Left ventricle myocardium superior (tissue), 1 donor: ENCODE measurements at regions of chr20 and their contacts with region 1.

Region 1: GRCh38 chr20:24629668-24630067 is 160.2 kb downstream of the SYNDIG1 start:
- DNase-seq: no peak
- ATAC-seq: peak; percentile 27

Region 2: GRCh38 chr20:23691655-23692054 is 938.0 kb before region 1 on chr20:
- intact Hi-C with region 1: no loop called
- DNase-seq: no peak
- ATAC-seq: no peak

Region 3: DNA sequence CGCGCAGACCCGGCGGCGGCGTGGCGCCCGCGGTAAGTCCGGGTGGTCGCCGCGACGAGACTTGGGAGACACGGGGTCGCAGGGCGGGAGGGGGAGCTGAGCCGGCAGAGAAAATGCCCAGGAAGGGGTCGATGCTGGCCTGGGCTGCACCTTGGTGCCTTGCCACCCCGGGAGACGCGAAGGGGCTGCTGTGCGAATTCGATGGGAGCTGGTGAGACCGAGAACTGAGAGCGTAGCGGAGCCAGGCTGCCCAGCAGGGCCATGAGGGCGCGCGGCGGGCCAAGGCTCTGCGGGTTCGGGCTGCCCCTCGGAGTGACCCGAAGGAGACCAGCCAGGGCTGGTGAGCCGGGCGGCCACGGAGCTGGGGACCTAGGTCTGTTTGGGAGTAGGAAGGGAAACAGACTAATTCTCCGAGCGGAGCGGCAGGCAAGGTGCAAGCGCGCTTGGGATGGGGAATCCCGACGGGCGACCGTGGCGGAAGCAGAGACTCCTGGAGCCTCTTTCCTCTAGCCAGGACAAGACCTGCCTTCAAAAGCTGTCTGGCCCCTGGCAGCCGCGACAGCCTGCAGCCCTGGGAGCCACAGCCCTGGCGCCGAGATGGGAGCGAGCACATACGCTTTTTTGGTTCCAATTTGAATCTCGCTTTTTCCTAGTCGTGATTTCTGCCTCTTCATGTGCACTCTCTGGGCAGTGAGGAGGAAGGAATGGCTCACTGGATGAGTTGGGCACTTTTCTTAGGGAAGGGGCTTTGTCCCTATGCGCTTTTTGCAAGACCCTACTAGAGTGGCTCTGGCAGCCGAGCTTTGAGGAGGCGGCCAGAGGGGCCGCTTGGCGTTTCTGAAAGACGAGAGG is 159.5 kb before region 1 on chr20:
- intact Hi-C with region 1: loop called (anchors 10 kb)
- DNase-seq: peak; percentile 43
- ATAC-seq: peak; percentile 18

Region 4: GRCh38 chr20:24732076-24732475 is 102.4 kb after region 1 on chr20:
- intact Hi-C with region 1: no loop called
- DNase-seq: no peak
- ATAC-seq: no peak

Region 5: GRCh38 chr20:24763386-24764026 is 133.8 kb after region 1 on chr20:
- intact Hi-C with region 1: no loop called
- DNase-seq: no peak
- ATAC-seq: no peak

Region 6: GRCh38 chr20:24795436-24795835 is 165.8 kb after region 1 on chr20:
- intact Hi-C with region 1: no loop called
- DNase-seq: no peak
- ATAC-seq: no peak